Heart right ventricle (tissue), 16 donors: ENCODE measurements at regions of chr19 and their contacts with region 1.

Region 1: DNA sequence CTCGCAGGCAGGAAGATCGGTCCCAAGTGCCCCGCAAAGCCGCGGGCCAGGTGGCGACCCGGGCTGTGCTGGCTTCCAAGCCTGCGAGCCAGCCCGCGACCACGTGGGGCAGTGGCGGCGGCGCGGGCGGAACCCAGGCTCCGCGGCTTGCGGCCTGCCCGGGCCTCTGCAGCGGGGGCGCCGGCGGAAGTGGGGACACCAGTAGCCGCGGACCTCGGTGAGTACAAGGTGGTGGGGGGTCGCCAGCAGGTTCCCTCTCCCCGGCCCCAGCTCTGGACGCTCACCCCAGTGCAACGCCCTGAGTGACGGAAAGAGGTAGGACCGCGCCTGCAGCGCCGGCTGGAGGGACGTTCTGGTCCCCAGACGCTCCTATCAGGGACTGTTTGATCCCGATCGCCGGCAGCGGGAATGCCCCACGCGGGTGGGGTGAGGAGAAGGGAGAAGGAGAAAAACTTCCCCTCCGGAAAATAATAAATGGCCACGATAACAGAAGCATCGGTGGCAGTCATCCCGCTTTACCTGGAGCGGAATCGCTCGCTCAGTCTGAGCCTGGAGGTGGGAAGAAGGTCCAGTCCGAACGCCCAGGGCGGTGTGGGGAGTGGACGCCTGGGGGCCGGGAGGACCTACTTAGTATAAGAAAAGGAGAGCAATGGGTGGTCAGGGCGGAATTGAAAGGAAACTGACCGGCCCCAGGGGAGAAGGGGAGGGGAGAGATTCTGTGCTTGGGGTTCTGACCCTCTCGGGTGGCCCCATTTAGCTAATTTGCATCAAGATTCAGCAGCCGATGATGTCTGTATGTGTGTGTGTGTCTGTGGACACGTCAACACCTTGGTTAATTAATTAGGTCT is at the start of gene GEMIN7:
- DNase-seq: peak; percentile 68 to 78
- ATAC-seq: peak; percentile 85 to 92 (median 90)
- H3K4me3 ChIP-seq: peak within 1 kb of the TSS; percentile 59 to 100 (median 94)
- H3K27ac ChIP-seq: peak within 1 kb of the TSS in 9 of 10 donors; percentile 68 to 93 (median 82)
- H3K4me1 ChIP-seq: peaks cover 13 to 51% (median 33%) of the 10 kb centered on the region in 9 donors
- H3K27me3 ChIP-seq: no peaks in the 10 kb centered on the region
- CTCF ChIP-seq: peak in 5 of 9 donors; percentile 10 to 30 (median 21)
- total RNA-seq, gene GEMIN7: 10.7 to 23.5 (median 13.0) TPM

Region 2: GRCh38 chr19:45027371-45027770 is 51.9 kb before region 1 on chr19:
- intact Hi-C with region 1: no loop called
- DNase-seq: no peak
- ATAC-seq: no peak
- H3K4me3 ChIP-seq: no peak overlapping the region
- H3K27ac ChIP-seq: no peak overlapping the region
- H3K4me1 ChIP-seq: no peaks in the 10 kb centered on the region
- H3K27me3 ChIP-seq: no peaks in the 10 kb centered on the region
- CTCF ChIP-seq: no peak

Region 3: DNA sequence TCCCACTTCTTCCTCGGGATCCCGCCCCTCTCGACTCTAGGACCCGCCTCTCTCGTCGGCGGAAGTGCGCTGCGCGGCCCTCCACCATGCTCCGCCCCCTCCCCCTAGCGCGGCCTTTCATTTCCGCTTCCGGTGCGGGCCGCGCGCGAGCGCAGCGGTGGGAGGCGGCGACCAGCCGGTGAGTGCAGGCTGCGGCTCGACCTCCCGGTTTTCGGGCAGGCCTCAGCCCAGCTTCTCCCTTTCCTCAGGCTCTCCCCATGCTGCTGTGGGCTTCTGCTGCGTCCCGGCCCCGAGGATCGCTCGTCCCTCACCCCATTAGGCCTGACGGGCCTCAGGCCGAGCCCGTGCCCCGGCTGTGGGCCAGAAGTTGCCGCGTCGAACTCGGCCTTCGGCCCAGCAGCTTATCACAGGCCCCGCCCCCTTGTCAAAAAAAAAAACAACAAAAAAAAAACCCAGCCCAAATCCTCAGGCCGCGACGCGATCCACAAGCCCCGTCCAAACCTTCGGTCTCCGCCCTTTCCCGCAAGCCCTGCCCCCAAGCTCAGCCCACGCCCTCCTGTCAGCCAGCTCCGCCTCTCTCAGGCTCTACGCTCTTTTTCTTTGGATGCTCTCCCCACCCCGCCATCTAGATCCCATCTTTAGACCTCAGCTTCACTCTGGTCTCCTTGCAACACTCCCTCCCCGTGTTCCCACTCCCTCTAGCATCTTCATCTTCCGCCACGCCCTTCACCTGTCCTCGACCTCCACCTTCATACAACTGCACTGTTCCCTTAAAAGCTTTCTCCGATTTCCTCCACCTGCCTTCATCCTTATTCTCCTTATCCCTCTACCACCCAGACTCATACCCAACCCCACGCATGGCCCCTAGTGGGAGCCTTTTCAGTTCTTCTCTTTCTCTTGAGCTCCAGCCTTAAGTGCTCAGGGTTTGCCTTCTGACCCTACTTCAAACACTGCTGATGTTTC is 40.1 kb before region 1 on chr19 and contains the start of gene CLASRP:
- intact Hi-C with region 1: loop called in 1 of 10 experiments (anchors 2 kb)
- DNase-seq: peak; percentile 92
- ATAC-seq: peak; percentile 98 to 99 (median 99)
- H3K4me3 ChIP-seq: peak within 1 kb of the TSS; percentile 64 to 98 (median 89)
- H3K27ac ChIP-seq: peak within 1 kb of the TSS; percentile 74 to 99 (median 96)
- H3K4me1 ChIP-seq: peaks cover 8 to 46% (median 30%) of the 10 kb centered on the region in 9 donors
- H3K27me3 ChIP-seq: no peaks in the 10 kb centered on the region
- CTCF ChIP-seq: no peak
- total RNA-seq, gene CLASRP: 24.0 to 50.4 (median 30.0) TPM

Region 4: DNA sequence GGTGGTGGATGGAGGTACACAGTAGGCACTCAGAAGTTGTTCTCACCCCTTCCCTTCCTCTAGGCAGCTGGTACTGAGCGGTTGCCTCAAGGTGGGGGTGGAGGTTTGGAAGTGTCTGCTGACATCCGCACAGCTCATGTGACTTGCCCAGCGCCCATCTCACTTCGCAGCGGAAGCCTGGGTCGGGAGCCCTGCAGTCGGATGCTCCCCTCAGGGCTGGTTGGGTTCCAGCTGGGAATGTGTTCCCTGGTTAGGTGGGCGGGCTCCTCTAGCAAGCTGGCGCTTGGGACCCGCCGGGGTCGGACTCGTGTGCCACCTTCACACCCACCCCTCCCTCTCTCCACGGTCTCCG is 23.8 kb after region 1 on chr19:
- intact Hi-C with region 1: loop called in 1 of 10 experiments (anchors 2 kb)
- DNase-seq: no peak
- ATAC-seq: peak; percentile 8 to 51 (median 38)
- H3K4me3 ChIP-seq: peak overlapping the region in 5 of 10 donors; percentile 16 to 34 (median 28)
- H3K27ac ChIP-seq: peak overlapping the region in 8 of 10 donors; percentile 5 to 75 (median 54)
- H3K4me1 ChIP-seq: peaks cover 12 to 76% (median 54%) of the 10 kb centered on the region in 9 donors
- H3K27me3 ChIP-seq: no peaks in the 10 kb centered on the region
- CTCF ChIP-seq: no peak